Endothelial cell of umbilical vein (primary cell): ENCODE measurements at regions of chr7 and their contacts with region 1.

Region 1: DNA sequence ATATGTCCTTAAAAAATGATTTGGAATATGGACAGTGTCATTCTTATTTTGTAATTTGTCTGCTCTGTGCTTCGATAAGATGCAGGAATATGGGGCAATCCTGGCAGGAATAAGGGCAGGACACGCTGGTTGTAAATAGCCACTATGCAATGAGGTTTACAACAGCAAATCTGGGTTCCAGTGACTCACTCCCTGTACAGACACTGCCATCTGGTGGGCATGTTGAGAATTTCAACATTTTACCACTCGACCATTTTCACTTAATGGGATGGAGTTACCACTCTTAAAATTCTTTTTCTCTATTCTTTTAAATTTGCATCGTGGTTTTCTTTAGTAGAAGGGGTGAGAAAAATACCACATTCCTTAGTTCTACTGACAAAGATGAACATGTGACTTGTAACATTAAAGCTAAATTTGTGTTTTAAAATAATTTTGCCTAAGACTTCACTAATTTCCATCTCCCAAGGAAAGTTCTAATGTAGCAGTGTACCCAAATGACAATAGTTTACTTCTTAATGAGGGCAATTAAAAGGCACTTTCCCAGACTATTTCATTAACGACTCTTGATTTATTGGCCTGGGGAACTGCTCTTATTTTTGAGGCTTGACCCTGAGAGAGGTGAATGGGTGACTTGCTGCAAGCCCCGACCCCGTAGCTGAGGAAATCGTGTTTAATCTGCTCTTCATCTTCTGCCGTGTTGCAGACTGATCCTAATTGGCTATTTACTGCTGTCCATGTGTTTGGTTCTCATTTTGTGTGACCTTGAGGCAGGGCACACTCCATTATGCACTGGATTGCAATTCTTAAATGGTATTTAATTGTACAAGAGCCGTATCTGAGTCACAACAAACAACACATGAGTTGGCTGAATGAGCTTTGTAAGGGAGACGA is 173.6 kb upstream of the IMMP2L start:
- DNase-seq: peak; percentile 75
- H3K4me3 ChIP-seq: no peak overlapping the region
- H3K27ac ChIP-seq: peak overlapping the region; percentile 40
- H3K4me1 ChIP-seq: peaks cover 10% of the 10 kb centered on the region
- H3K27me3 ChIP-seq: no peaks in the 10 kb centered on the region
- CTCF ChIP-seq: peak; percentile 64 to 65
- POLR2A ChIP-seq: no peak

Region 2: GRCh38 chr7:109844362-109844761 is 1891.5 kb before region 1 on chr7:
- CTCF ChIA-PET with region 1: no interaction called
- POLR2A ChIA-PET with region 1: no interaction called
- dilution Hi-C with region 1: no loop called
- intact Hi-C with region 1: loop called (anchors 10 kb)
- DNase-seq: peak; percentile 29
- H3K4me3 ChIP-seq: no peak overlapping the region
- H3K27ac ChIP-seq: no peak overlapping the region
- H3K4me1 ChIP-seq: no peaks in the 10 kb centered on the region
- H3K27me3 ChIP-seq: no peaks in the 10 kb centered on the region
- CTCF ChIP-seq: peak; percentile 20 to 27
- POLR2A ChIP-seq: no peak

Region 3: GRCh38 chr7:111329367-111330234 is 406.3 kb before region 1 on chr7:
- CTCF ChIA-PET with region 1: interaction called, 5 read pairs
- POLR2A ChIA-PET with region 1: no interaction called
- dilution Hi-C with region 1: no loop called
- intact Hi-C with region 1: loop called (anchors 1 kb)
- DNase-seq: peak; percentile 25
- H3K4me3 ChIP-seq: no peak overlapping the region
- H3K27ac ChIP-seq: no peak overlapping the region
- H3K4me1 ChIP-seq: no peaks in the 10 kb centered on the region
- H3K27me3 ChIP-seq: no peaks in the 10 kb centered on the region
- CTCF ChIP-seq: no peak
- POLR2A ChIP-seq: no peak

Region 4: DNA sequence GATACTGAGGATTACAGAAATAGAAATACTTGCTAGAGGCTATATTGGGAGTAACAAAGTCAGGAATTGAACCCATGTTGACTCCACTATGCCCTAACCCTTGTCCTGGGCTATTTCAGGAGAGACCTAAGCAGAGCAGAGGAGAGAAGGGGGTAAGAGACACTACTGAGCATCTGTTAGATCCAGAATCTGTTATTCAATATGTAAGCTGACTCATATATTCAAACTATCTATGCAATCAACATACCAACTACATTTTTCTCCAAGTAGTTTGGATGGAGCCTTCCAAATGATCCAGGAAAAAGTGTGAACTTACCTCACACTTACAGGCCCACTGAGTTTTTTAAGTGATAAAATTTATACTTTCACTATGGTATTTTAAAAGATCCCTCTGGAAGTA is 389.7 kb before region 1 on chr7:
- CTCF ChIA-PET with region 1: no interaction called
- POLR2A ChIA-PET with region 1: no interaction called
- dilution Hi-C with region 1: no loop called
- intact Hi-C with region 1: no loop called
- DNase-seq: no peak
- H3K4me3 ChIP-seq: no peak overlapping the region
- H3K27ac ChIP-seq: no peak overlapping the region
- H3K4me1 ChIP-seq: no peaks in the 10 kb centered on the region
- H3K27me3 ChIP-seq: no peaks in the 10 kb centered on the region
- CTCF ChIP-seq: no peak
- POLR2A ChIP-seq: no peak

Region 5: DNA sequence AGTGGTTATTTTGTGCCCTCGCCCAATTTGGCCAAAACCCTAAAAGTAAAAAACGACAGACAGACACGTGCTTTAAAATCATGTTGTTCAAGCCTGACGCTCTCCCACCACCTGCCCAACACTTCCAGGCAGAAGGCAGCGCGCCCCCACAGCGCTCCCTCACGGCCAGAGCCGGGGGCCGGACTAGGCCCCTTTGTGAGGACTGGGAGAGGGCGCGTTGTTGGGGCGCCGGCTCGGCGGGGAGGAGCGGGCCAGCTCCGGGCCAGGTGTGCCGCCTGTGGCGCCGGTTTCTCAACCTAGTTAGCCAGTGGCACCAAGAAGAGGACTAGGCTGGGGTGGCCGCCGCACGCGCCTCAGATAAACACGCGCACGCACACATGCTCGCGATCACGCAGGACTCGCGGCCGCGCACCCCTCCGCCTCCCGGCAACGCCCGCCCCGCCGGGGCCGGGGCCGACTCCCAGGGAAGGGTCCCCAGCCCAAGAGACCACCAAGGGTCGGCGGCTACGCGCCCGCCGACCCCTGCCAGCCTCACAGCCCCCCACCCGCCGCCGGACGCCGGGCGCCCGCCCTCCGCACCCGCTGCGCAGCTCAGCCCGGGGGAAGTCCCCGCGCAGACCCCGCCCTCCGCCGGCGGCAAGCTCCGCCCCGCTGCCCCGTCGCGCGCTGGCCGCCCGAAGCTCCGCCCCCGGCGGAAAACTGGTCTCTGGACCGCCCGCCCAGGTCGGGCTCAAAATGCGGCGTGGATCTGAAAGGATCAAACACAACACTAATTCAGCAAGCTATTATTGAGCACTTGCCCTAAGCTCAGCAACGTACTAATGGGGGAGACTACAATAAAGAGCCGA is 173.8 kb before region 1 on chr7 and contains the start of gene IMMP2L:
- CTCF ChIA-PET with region 1: no interaction called
- POLR2A ChIA-PET with region 1: no interaction called
- dilution Hi-C with region 1: no loop called
- intact Hi-C with region 1: loop called (anchors 5 kb)
- DNase-seq: peak; percentile 89
- H3K4me3 ChIP-seq: peak within 1 kb of the TSS; percentile 22 to 63 (median 57)
- H3K27ac ChIP-seq: peak within 1 kb of the TSS; percentile 64
- H3K4me1 ChIP-seq: peaks cover 14% of the 10 kb centered on the region
- H3K27me3 ChIP-seq: peaks cover 0 to 3% of the 10 kb centered on the region in 2 experiments
- CTCF ChIP-seq: peak; percentile 25 to 62
- POLR2A ChIP-seq: peak; percentile 63
- total RNA-seq, gene IMMP2L: 7.9 and 9.9 TPM in 2 replicates

Region 6: DNA sequence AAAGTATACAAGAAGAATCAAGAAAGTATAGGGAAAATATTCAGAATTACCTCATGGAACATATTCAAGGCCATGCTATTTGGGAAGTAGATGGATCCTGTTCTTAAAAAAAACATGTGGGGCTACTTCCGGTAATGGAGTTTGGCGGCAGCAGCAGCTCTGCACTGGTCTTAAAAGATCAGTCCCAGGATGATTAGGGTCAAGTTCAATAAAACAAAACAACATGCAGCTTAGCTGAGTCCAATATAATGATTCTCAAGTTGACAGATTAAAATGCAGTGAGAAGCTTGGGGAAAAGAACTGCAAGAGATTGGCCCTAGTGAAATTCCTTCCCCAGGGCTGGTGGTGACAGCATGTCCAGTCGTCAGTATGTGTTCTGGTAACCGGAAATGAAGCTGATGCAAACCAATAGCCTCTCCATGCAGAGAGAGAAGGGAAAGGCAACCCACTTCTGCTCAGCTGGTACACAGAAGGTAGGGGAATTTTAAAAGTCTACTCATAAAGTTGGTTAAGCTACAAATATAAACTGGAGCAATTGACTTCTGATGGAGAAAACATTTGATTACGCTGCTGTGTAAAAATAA is 131.5 kb after region 1 on chr7:
- CTCF ChIA-PET with region 1: no interaction called
- POLR2A ChIA-PET with region 1: no interaction called
- dilution Hi-C with region 1: no loop called
- intact Hi-C with region 1: no loop called
- DNase-seq: no peak
- H3K4me3 ChIP-seq: no peak overlapping the region
- H3K27ac ChIP-seq: no peak overlapping the region
- H3K4me1 ChIP-seq: peaks cover 5% of the 10 kb centered on the region
- H3K27me3 ChIP-seq: no peaks in the 10 kb centered on the region
- CTCF ChIP-seq: no peak
- POLR2A ChIP-seq: no peak

Region 7: GRCh38 chr7:111931016-111931517 is 195.2 kb after region 1 on chr7:
- CTCF ChIA-PET with region 1: no interaction called
- POLR2A ChIA-PET with region 1: no interaction called
- dilution Hi-C with region 1: no loop called
- intact Hi-C with region 1: no loop called
- DNase-seq: peak; percentile 65
- H3K4me3 ChIP-seq: no peak overlapping the region
- H3K27ac ChIP-seq: no peak overlapping the region
- H3K4me1 ChIP-seq: peaks cover 14% of the 10 kb centered on the region
- H3K27me3 ChIP-seq: no peaks in the 10 kb centered on the region
- CTCF ChIP-seq: no peak
- POLR2A ChIP-seq: no peak

Region 8: GRCh38 chr7:112495810-112496462 is 760.0 kb after region 1 on chr7:
- CTCF ChIA-PET with region 1: interaction called, 4 read pairs
- POLR2A ChIA-PET with region 1: no interaction called
- dilution Hi-C with region 1: no loop called
- intact Hi-C with region 1: loop called (anchors 5 kb)
- DNase-seq: peak; percentile 75
- H3K4me3 ChIP-seq: no peak overlapping the region
- H3K27ac ChIP-seq: no peak overlapping the region
- H3K4me1 ChIP-seq: no peaks in the 10 kb centered on the region
- H3K27me3 ChIP-seq: peaks cover 0 to 4% of the 10 kb centered on the region in 2 experiments
- CTCF ChIP-seq: peak; percentile 45 to 58
- POLR2A ChIP-seq: no peak